BJ (cell line): ENCODE measurements at regions of chr11 and their contacts with region 1.

Region 1: GRCh38 chr11:9534791-9535781 is 38.4 kb upstream of the WEE1 start:
- DNase-seq: peak; percentile 38
- H3K4me3 ChIP-seq: no peak overlapping the region
- H3K27me3 ChIP-seq: no peaks in the 10 kb centered on the region
- CTCF ChIP-seq: peak; percentile 80

Region 2: DNA sequence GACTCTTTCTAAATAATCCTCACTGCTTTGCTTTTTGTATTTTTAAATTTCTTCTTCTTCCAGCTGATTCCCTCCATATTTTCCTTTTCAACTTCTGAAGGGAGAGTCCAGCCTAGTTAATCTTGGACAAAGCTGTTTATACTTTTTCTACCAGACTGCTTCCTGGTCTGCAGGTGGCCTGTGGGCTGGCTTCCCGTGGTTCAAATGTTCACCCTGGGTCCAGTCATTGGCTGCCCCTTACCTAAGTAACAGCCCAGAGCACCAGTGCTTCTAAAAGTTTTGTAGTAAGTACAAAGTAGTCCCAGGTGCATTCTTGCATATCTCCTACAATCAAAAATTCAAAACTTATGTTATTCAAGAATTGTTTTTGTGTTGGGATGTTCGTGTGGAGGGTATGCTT is 55.2 kb before region 1 on chr11:
- CTCF ChIA-PET with region 1: no interaction called
- POLR2A ChIA-PET with region 1: no interaction called
- DNase-seq: no peak
- H3K4me3 ChIP-seq: no peak overlapping the region
- H3K27me3 ChIP-seq: no peaks in the 10 kb centered on the region
- CTCF ChIP-seq: no peak

Region 3: GRCh38 chr11:9565822-9566560 is 30.9 kb after region 1 on chr11:
- CTCF ChIA-PET with region 1: interaction called, 14 read pairs
- POLR2A ChIA-PET with region 1: no interaction called
- DNase-seq: peak; percentile 100
- H3K4me3 ChIP-seq: no peak overlapping the region
- H3K27me3 ChIP-seq: no peaks in the 10 kb centered on the region
- CTCF ChIP-seq: no peak

Region 4: DNA sequence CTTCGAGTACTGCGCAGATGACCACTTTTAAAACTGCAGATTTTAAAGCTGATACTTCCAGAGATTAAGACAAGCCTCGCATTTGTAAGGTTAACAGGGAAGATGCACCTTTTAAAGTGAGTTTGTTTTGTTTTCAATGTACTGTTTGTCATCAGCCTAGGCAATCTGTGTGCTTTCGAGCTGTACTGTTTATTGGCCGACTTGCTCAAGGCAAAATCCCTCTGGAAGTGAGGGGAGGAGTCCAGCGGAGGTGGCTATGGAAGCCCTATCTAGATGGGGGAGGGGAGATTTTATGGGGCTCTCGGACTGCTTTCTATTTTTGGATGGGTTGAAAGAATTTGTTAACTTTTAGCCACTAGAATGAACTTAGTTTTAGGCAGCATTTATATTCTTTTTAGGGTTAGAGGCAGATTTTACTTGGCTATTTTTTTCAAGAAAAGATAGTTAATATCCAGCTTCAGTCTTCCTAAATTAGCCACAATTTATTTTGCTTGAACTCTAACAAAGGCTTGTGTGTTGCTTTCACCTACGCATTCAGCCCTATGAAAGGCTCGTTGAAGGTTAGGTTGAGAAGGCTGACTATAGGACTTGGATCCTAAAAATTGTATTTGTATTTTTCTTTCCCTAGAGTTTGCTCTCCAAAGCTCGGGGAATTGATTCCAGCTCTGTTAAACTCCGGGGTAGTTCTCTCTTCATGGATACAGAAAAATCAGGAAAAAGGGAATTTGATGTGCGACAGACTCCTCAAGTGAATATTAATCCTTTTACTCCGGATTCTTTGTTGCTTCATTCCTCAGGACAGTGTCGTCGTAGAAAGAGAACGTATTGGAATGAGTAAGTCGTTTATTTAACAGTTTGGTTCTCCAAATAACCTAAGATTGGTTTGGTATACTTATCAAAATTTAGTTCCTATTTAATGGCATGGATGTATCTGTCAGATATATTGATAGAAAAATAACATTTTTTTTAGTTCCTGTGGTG is 40.5 kb after region 1 on chr11:
- CTCF ChIA-PET with region 1: interaction called, 13 read pairs
- POLR2A ChIA-PET with region 1: no interaction called
- DNase-seq: peak; percentile 61
- H3K4me3 ChIP-seq: peak overlapping the region; percentile 96
- H3K27me3 ChIP-seq: no peaks in the 10 kb centered on the region
- CTCF ChIP-seq: no peak

Region 5: DNA sequence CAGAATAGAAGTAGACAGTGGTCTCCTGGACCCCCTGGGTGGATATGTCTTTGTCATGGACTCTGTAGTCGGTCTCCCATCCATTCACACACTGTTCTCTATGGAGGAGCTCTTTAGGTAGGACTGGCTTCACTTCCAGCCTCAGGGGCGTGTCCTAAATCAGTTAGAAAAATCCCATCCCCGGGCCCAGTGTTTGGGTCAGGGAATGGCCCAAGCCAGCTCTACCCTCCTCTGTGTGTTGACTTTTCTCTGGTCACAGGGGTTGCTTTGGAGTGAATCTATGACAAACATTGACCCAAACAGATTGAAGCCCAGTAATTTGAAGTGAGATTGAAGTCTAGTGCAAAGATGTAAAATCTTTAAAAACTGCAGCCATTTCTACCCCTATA is 72.4 kb after region 1 on chr11:
- CTCF ChIA-PET with region 1: no interaction called
- POLR2A ChIA-PET with region 1: no interaction called
- DNase-seq: no peak
- H3K4me3 ChIP-seq: no peak overlapping the region
- H3K27me3 ChIP-seq: no peaks in the 10 kb centered on the region
- CTCF ChIP-seq: no peak